ENCODE measurements at regions of chr2 and their contacts with region 1.

Region 1: GRCh38 chr2:14634201-14634884 is 1.8 kb downstream of the LRATD1 start:
- DNase-seq: peak; percentile 82 to 90 (median 84)
- H3K4me3 ChIP-seq: peak overlapping the region; percentile 50
- H3K27ac ChIP-seq: peak overlapping the region; percentile 43 to 80
- H3K4me1 ChIP-seq: peaks cover 5% of the 10 kb centered on the region
- H3K27me3 ChIP-seq: no peaks in the 10 kb centered on the region
- CTCF ChIP-seq: peak; percentile 67 to 73 (median 72)
- EP300 ChIP-seq: no peak
- POLR2A ChIP-seq: no peak

Region 2: GRCh38 chr2:13480057-13480456 is 1154.3 kb before region 1 on chr2:
- intact Hi-C with region 1: loop called in 1 of 4 experiments (anchors 10 kb)
- DNase-seq: no peak
- H3K4me3 ChIP-seq: no peak overlapping the region
- H3K27ac ChIP-seq: no peak overlapping the region
- H3K4me1 ChIP-seq: no peaks in the 10 kb centered on the region
- H3K27me3 ChIP-seq: no peaks in the 10 kb centered on the region
- CTCF ChIP-seq: no peak
- EP300 ChIP-seq: no peak
- POLR2A ChIP-seq: no peak

Region 3: DNA sequence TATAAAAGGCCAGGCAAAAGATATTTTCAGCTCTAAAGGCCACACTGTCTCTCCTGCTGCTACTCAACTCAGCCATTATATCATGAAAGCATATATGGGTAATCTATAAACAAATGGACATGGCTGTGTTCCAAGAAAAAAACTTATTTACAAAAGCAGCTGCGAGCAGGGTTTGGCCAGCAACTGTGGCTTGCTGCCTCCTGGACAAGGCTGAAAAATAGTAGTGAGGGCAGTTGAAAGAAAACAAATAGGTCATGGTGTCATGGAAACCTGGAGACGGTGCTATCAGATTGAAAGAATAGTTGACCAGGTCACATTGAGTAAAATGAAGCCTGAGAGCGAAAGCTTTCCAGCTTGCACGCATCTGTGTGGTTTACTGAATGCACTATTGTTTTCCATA is 91.0 kb before region 1 on chr2:
- intact Hi-C with region 1: no loop called
- DNase-seq: no peak
- H3K4me3 ChIP-seq: no peak overlapping the region
- H3K27ac ChIP-seq: no peak overlapping the region
- H3K4me1 ChIP-seq: no peaks in the 10 kb centered on the region
- H3K27me3 ChIP-seq: no peaks in the 10 kb centered on the region
- CTCF ChIP-seq: no peak
- EP300 ChIP-seq: no peak
- POLR2A ChIP-seq: no peak

Region 4: DNA sequence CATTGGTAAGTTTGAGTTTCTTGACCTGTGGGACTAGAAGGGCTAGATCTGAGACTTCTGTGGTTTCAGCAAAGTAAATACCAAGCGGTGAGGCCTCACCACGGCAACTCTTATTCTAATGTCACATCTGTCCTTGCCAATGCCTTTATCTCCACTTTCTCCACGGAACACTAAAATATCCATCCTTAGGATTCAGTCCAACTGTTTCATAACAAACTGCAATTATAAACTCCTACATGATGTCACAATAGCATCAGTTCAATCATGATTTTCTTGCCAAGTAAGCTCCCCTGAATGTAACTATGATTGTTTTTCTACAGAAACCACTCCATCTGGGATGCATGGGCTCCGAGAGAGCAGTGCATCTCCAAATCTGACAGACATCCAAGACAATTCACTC is 77.8 kb after region 1 on chr2:
- intact Hi-C with region 1: no loop called
- DNase-seq: no peak
- H3K4me3 ChIP-seq: no peak overlapping the region
- H3K27ac ChIP-seq: peak overlapping the region in 1 of 2 donors; percentile 17
- H3K4me1 ChIP-seq: peaks cover 2% of the 10 kb centered on the region
- H3K27me3 ChIP-seq: no peaks in the 10 kb centered on the region
- CTCF ChIP-seq: no peak
- EP300 ChIP-seq: no peak
- POLR2A ChIP-seq: no peak

Measured in ovary (tissue), 10 donors.